Activated naive CD4-positive, alpha-beta T cell treated with anti-CD3 and anti-CD28 coated beads for 36 hours (primary cell): ENCODE measurements at regions of chr17 and their contacts with region 1.

Region 1: DNA sequence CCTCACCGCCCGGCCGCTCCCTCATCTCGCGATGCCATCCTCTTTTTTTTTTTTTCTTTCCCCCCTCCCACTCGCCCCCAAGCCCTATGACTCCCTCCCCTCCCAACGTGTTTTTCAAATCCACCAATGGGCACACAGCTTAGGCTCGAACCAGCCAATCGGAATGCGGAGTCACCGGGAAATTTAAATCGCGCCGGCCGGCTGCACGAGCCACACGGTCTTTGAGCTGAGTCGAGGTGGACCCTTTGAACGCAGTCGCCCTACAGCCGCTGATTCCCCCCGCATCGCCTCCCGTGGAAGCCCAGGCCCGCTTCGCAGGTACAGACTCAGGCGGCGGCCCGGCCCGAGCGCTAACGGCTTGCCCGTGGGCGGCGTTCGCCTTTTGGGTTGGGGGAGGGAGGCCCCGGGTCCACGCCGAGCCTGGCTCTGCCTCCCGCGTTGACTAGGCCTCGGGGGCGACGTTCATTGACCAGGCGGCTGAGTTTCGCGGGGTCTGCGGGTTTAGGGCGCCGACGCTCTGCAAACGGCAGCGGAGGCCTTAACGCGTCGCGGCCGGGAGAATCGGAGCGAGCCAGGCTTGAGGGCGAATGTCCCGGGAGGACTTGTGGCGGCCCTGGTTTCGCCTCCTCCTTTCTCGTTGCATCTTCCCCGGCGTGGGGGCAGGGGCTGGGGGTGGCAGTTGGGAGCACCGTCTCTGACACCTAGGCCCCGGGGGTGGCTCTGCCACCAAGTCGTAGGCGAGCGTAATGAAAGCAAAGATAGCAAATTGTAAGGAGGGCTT is at the start of gene KPNA2:
- DNase-seq: peak; percentile 94
- H3K4me3 Mint-ChIP-seq: peak within 1 kb of the TSS; percentile 94
- H3K27ac Mint-ChIP-seq: peak within 1 kb of the TSS; percentile 96
- H3K4me1 Mint-ChIP-seq: peaks cover 19% of the 10 kb centered on the region
- H3K27me3 Mint-ChIP-seq: no peaks in the 10 kb centered on the region
- total RNA-seq, gene KPNA2: 186 to 203 TPM

Region 2: DNA sequence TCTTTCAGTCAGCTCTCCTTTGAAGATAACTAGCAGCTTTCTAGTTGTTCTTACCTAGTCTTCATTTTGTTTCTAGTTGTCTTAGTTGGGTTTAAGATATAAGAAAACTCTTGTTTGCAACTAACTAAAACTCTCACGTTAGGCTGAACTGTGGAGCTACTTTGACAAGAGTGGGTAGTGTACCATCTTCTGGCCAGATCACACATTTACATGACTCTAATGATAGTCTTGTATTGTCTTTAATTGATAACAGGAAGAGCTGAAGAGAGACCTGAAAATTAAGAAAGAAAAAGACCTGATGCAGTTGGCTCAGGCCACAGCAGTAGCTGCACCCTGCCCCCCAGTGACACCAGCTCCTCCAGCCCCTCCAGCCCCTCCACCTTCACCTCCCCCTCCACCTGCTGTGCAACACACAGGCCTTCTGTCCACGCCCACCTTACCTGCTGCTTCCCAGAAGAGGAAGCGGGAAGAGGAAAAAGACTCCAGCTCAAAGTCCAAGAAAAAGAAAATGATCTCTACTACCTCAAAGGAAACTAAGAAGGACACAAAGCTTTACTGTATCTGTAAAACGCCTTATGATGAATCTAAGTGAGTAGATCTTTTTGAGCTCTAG is 76.3 kb before region 1 on chr17:
- CTCF ChIA-PET with region 1: no interaction called
- intact Hi-C with region 1: loop called (anchors 1 kb)
- DNase-seq: no peak
- H3K4me3 Mint-ChIP-seq: no peak overlapping the region
- H3K27ac Mint-ChIP-seq: peak overlapping the region; percentile 68
- H3K4me1 Mint-ChIP-seq: peaks cover 15% of the 10 kb centered on the region
- H3K27me3 Mint-ChIP-seq: no peaks in the 10 kb centered on the region

Region 3: DNA sequence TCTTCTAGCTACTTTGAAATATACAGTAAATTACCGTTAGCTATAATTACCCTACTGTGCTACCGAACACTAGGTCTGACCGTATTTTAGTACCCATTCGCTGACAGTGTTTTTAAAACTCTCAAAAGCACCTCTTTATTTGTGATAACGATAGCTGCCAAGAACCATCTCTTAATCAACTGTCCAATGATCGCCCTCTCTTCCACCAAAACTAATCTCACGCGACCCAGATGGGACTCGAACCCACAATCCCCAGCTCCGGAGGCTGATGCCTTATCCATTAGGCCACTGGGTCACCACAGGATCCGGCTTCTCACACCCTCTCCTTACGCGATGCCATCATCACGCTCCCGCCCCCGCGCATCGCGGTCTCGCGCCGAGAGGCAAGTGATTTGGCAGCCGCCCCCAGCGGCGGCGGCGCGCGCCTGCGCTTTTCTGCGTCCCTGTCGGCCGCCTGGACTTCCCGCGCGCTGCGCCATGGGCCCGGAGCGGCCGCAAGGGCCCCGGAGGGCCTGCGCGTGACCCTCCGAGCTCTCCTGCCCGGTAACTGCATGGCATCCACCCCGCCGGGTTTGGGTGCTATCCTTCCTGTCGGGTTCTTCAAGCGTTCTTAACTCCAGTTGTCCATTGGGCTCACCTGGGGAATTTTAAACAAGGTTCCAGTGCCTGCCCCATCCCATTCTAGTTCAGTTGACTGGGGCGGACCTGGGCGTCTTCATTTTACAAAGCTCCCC is 15.9 kb before region 1 on chr17:
- CTCF ChIA-PET with region 1: interaction called, 4 read pairs
- intact Hi-C with region 1: loop called (anchors 1 kb)
- DNase-seq: peak; percentile 99
- H3K4me3 Mint-ChIP-seq: peak overlapping the region; percentile 77
- H3K27ac Mint-ChIP-seq: peak overlapping the region; percentile 94
- H3K4me1 Mint-ChIP-seq: peaks cover 11% of the 10 kb centered on the region
- H3K27me3 Mint-ChIP-seq: peaks cover 2% of the 10 kb centered on the region

Region 4: DNA sequence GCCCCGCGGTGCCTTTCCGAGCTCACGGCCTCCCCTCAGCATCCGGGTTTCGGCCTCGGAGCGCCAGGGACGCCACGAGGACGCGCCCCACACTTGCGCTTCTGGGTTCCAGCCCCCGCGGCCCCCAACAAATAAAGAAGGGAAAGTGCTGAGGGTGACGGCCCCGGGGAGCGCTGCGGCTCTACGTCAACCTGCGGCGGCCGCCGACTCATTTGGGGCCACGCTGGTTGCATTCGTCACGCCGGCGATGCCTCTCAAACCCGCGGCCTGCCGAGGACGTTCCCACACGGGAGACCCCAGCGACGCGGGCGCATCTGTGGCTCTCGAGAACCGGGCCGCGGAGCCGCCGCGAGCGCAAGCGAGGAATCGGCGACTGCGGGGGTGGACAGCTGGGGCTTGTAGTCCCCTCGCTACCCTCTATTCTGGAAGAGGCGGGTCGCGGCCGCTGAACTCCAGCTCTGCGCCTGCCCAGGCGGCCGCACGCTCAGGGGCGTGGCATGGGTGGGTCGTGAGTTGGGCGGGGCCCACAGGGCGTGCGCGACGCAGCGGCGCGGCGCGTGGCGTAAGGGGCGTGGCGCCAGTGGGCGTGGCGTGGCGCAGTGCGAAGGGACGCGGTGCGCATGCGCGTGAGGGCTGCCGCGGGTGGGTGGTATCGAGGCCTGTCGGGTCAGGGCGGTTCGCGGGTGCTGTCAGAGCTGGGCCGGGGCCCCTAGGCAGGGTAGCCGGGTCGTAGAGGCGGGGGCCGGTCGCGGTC is 211.9 kb after region 1 on chr17 and contains the start of gene AMZ2:
- CTCF ChIA-PET with region 1: no interaction called
- intact Hi-C with region 1: loop called (anchors 2 kb)
- DNase-seq: peak; percentile 94
- H3K4me3 Mint-ChIP-seq: peak within 1 kb of the TSS; percentile 89
- H3K27ac Mint-ChIP-seq: peak within 1 kb of the TSS; percentile 95
- H3K4me1 Mint-ChIP-seq: peaks cover 31% of the 10 kb centered on the region
- H3K27me3 Mint-ChIP-seq: no peaks in the 10 kb centered on the region
- total RNA-seq, gene AMZ2: 190 to 195 TPM